Ovary (tissue), 10 donors: ENCODE measurements at regions of chr10 and their contacts with region 1.

Region 1: DNA sequence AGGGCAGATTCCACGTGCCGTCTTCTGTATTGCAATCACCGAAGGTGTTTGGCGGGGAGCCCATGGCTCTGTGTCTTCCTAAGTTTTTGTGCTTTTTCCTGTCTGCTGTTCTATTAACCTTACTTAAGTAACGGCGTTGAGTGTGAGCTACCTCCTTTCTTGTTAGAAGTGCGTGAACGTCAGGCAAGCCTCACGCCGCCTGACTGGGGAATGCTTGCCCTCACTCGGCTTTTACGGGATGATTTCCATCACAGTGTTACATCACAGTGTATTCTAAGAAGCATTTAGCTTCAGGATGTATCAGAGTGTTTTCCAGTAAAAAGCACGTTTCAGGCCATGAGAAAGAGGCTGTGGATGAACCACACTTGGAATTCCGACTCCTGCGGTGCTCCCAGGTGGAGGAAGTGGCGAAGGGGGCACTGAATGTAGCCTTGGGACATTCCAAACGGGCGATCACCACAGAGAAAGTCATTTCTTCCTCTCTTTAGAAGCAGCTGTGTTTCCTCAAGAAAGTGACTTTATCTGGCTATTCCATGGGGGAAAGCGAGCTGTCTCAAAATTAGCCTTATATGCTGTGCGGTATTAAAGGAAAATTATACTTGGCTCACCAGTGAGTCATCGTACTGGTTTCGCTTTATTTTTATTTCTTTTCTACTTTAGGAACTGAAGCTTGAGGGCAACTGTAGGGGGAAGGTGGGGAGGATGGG is 290.7 kb downstream of the KLF6 start:
- DNase-seq: peak; percentile 68 to 80 (median 75)
- H3K4me3 ChIP-seq: peak overlapping the region; percentile 27
- H3K27ac ChIP-seq: peak overlapping the region; percentile 86 to 94
- H3K4me1 ChIP-seq: no peaks in the 10 kb centered on the region
- H3K27me3 ChIP-seq: no peaks in the 10 kb centered on the region
- CTCF ChIP-seq: no peak
- EP300 ChIP-seq: peak; percentile 88
- POLR2A ChIP-seq: peak; percentile 52

Region 2: DNA sequence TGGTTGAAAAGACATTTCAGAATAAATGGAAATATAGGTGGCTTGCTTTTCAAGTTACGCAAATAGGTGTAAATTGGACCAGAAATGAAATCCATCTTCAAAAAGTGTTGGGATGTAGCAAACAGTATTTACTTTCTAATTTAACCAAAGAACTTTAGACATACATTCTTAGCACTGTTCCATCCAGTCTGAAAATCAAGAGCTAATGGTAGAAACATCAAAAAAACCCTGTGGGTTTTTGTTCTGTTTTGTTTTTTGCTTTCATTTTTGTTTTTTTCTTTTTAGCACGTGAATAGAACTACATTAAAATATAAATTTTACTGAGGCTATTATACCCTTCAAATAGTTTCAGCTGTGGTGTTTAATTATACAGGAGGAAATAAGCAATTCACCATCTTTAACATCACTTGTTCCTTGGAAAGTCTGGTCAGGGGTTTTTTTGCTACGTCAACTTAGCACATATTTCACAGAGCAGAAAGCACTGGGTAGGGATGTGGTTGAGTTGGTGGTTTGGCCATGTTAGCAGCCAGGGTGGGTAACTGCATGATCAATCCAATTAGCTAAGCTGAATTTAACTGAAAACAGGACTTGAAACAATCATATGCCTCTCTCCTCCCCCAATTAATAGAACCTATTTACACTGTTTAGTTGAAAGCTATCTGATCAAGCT is 702.4 kb before region 1 on chr10:
- intact Hi-C with region 1: no loop called
- DNase-seq: no peak
- H3K4me3 ChIP-seq: no peak overlapping the region
- H3K27ac ChIP-seq: no peak overlapping the region
- H3K4me1 ChIP-seq: no peaks in the 10 kb centered on the region
- H3K27me3 ChIP-seq: no peaks in the 10 kb centered on the region
- CTCF ChIP-seq: no peak
- EP300 ChIP-seq: no peak
- POLR2A ChIP-seq: no peak

Region 3: DNA sequence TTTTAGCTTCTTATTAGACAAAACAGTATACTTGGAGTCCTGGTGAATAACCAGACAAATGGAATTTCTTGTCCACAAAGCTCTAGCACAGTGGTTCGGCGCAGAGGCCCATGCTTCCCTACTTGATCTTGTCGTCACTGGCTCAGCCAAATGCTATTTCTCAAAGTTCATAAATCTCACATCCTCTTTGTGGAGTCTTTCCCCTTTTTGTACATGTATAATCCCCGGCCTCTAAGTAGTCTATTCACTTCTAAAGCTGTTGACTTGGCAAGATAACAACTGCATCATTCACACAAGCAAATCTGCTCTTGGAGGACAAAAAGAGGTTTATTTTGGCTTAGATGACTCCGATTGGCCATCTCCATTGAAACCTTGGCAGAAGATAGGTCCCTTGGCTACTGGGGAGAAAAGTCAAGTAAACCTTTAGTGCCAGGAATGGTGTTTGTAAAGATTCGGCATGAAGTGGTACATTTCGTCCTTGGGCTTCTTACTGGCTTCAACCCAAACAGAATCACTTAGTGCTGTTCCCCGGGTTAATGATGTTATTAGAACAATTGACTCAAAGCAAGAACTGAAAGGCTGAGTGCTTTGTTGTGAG is 1326.6 kb after region 1 on chr10:
- intact Hi-C with region 1: loop called in 1 of 4 experiments (anchors 5 kb)
- DNase-seq: no peak
- H3K4me3 ChIP-seq: no peak overlapping the region
- H3K27ac ChIP-seq: no peak overlapping the region
- H3K4me1 ChIP-seq: no peaks in the 10 kb centered on the region
- H3K27me3 ChIP-seq: no peaks in the 10 kb centered on the region
- CTCF ChIP-seq: no peak
- EP300 ChIP-seq: no peak
- POLR2A ChIP-seq: no peak